Panc1 (cell line): ENCODE measurements at regions of chr15 and their contacts with region 1.

Region 1: GRCh38 chr15:80989518-80990478 is at the start of gene MESD:
- DNase-seq: peak; percentile 71
- ATAC-seq: peak; percentile 100
- H3K4me3 ChIP-seq: peak within 1 kb of the TSS; percentile 98 to 99
- H3K27ac ChIP-seq: peak within 1 kb of the TSS; percentile 98
- H3K4me1 ChIP-seq: peaks cover 17% of the 10 kb centered on the region
- H3K27me3 ChIP-seq: no peaks in the 10 kb centered on the region
- CTCF ChIP-seq: no peak
- total RNA-seq, gene MESD: 28.2 TPM

Region 2: DNA sequence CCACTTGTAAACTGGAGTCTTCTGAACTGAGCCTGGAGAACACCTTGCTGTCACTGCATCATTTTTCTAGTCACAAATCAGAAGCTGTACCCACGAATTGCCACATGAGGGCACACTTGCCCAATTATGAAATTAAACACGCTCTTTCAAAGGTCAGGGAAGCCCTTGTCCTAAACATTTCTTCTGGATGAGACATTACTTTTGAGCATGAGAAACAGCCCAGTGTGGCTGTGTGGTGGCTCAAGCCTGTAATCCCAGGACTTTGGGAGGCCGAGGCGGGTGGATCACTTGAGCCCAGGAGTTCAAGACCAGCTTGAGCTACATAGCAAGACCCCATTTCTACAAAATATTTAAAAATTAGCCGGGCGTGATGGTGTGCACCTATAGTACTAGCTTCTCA is 116.8 kb after region 1 on chr15:
- CTCF ChIA-PET with region 1: no interaction called
- POLR2A ChIA-PET with region 1: no interaction called
- in situ Hi-C with region 1: no loop called
- intact Hi-C with region 1: loop called (anchors 10 kb)
- DNase-seq: peak; percentile 60
- ATAC-seq: peak; percentile 80
- H3K4me3 ChIP-seq: no peak overlapping the region
- H3K27ac ChIP-seq: no peak overlapping the region
- H3K4me1 ChIP-seq: no peaks in the 10 kb centered on the region
- H3K27me3 ChIP-seq: peaks cover 6% of the 10 kb centered on the region; the same call in 1 of the 2 replicates
- CTCF ChIP-seq: peak; percentile 85